Calu3 (cell line): ENCODE measurements at regions of chr18 and their contacts with region 1.

Region 1: DNA sequence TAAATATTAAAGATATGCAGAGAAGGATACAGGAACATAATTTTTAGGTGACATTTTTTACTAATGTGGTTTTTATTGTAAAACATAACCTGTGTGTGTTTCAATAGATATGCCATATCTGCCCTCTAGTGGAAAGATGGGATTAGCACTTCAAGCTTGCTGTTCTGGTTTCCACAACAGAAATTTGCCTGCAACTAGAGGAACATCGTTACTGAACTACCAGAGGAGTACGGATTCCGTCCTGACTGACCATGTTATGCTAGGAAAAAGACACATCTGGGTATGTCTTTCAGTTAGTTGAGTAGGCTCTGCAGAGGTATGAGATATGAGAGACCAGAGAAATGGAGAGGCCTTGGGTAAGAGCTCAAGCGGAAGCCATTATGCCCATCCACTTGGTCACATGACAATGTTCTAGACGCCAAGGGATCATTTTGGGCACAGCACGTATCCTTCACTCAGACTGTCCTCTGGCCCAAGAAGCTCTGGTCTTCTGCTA is 104.9 kb downstream of the MBD2 start:
- DNase-seq: peak; percentile 35
- H3K4me3 Mint-ChIP-seq: peak overlapping the region; percentile 35
- H3K27ac Mint-ChIP-seq: no peak overlapping the region
- H3K4me1 Mint-ChIP-seq: no peaks in the 10 kb centered on the region
- H3K27me3 Mint-ChIP-seq: no peaks in the 10 kb centered on the region
- CTCF ChIP-seq: peak; percentile 69

Region 2: GRCh38 chr18:53567929-53568574 is 551.5 kb before region 1 on chr18:
- CTCF ChIA-PET with region 1: no interaction called
- intact Hi-C with region 1: loop called (anchors 2 kb)
- DNase-seq: no peak
- H3K4me3 Mint-ChIP-seq: no peak overlapping the region
- H3K27ac Mint-ChIP-seq: no peak overlapping the region
- H3K4me1 Mint-ChIP-seq: no peaks in the 10 kb centered on the region
- H3K27me3 Mint-ChIP-seq: no peaks in the 10 kb centered on the region
- CTCF ChIP-seq: peak; percentile 38

Region 3: DNA sequence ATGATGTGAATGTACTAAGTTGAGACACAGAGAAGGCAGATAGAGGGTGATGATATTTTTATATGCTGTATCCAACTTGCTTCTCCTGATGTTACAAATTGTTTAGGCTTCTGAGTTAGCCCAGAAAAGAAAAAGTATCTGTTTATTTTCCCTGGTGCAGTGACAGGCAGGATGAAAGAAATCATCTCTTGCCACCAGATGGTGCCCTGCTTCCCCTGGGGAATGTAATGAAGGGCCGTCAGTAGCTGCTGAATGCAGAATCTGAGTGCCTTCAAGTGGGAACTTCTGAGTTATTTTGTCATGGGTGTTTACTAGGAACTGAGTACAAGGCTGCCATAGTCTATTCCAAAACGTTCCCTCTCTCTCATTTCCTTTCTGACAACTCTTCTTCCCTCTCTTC is 420.7 kb before region 1 on chr18:
- CTCF ChIA-PET with region 1: interaction called, 6 read pairs
- intact Hi-C with region 1: loop called (anchors 1 kb)
- DNase-seq: peak; percentile 30
- H3K4me3 Mint-ChIP-seq: no peak overlapping the region
- H3K27ac Mint-ChIP-seq: no peak overlapping the region
- H3K4me1 Mint-ChIP-seq: no peaks in the 10 kb centered on the region
- H3K27me3 Mint-ChIP-seq: no peaks in the 10 kb centered on the region
- CTCF ChIP-seq: peak; percentile 28

Region 4: GRCh38 chr18:53909668-53910067 is 209.9 kb before region 1 on chr18:
- CTCF ChIA-PET with region 1: interaction called, 4 read pairs
- intact Hi-C with region 1: loop called (anchors 2 kb)
- DNase-seq: peak; percentile 34
- H3K4me3 Mint-ChIP-seq: no peak overlapping the region
- H3K27ac Mint-ChIP-seq: no peak overlapping the region
- H3K4me1 Mint-ChIP-seq: no peaks in the 10 kb centered on the region
- H3K27me3 Mint-ChIP-seq: no peaks in the 10 kb centered on the region
- CTCF ChIP-seq: peak; percentile 58

Region 5: GRCh38 chr18:53971331-53971730 is 148.2 kb before region 1 on chr18:
- CTCF ChIA-PET with region 1: no interaction called
- intact Hi-C with region 1: no loop called
- DNase-seq: no peak
- H3K4me3 Mint-ChIP-seq: no peak overlapping the region
- H3K27ac Mint-ChIP-seq: no peak overlapping the region
- H3K4me1 Mint-ChIP-seq: no peaks in the 10 kb centered on the region
- H3K27me3 Mint-ChIP-seq: no peaks in the 10 kb centered on the region
- CTCF ChIP-seq: no peak

Region 6: DNA sequence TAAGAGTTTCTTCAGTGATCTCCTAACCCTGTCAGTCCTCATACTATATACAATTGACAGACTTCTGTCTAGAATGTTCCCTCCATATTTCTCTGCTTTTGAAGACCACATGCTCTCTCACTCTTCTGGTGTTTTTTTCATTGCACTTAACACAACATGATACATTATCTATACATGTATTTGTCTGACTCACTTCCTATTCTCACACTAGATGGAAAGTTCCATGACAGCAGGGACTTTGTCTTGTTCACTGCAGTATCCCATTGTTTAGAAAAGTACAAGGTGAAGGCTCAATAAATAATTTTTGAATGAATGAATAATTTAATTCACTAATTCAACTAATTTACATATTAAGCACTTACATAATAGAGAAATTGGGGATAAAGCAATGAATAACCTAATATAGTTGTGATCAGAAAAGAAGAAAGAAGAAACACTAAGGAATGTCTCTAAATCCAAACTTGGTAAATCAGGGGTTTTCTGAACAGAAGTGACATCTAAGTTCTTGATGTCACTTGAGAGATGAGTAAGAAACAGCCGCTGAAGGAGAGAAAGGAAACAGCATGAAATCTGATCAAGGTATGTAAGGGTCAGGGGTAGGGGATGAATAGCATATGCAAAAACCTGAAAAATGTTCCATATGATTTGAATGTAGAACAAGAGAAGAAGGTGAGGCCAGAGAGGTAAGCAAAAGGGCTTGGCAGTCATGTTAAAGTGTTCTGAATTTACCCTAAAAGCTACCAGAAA is 62.5 kb after region 1 on chr18:
- CTCF ChIA-PET with region 1: no interaction called
- intact Hi-C with region 1: no loop called
- DNase-seq: no peak
- H3K4me3 Mint-ChIP-seq: no peak overlapping the region
- H3K27ac Mint-ChIP-seq: no peak overlapping the region
- H3K4me1 Mint-ChIP-seq: no peaks in the 10 kb centered on the region
- H3K27me3 Mint-ChIP-seq: no peaks in the 10 kb centered on the region
- CTCF ChIP-seq: no peak

Region 7: GRCh38 chr18:54296062-54296461 is 176.5 kb after region 1 on chr18:
- CTCF ChIA-PET with region 1: no interaction called
- intact Hi-C with region 1: no loop called
- DNase-seq: no peak
- H3K4me3 Mint-ChIP-seq: no peak overlapping the region
- H3K27ac Mint-ChIP-seq: no peak overlapping the region
- H3K4me1 Mint-ChIP-seq: no peaks in the 10 kb centered on the region
- H3K27me3 Mint-ChIP-seq: no peaks in the 10 kb centered on the region
- CTCF ChIP-seq: no peak